ENCODE measurements at regions of chr17 and their contacts with region 1.

Region 1: DNA sequence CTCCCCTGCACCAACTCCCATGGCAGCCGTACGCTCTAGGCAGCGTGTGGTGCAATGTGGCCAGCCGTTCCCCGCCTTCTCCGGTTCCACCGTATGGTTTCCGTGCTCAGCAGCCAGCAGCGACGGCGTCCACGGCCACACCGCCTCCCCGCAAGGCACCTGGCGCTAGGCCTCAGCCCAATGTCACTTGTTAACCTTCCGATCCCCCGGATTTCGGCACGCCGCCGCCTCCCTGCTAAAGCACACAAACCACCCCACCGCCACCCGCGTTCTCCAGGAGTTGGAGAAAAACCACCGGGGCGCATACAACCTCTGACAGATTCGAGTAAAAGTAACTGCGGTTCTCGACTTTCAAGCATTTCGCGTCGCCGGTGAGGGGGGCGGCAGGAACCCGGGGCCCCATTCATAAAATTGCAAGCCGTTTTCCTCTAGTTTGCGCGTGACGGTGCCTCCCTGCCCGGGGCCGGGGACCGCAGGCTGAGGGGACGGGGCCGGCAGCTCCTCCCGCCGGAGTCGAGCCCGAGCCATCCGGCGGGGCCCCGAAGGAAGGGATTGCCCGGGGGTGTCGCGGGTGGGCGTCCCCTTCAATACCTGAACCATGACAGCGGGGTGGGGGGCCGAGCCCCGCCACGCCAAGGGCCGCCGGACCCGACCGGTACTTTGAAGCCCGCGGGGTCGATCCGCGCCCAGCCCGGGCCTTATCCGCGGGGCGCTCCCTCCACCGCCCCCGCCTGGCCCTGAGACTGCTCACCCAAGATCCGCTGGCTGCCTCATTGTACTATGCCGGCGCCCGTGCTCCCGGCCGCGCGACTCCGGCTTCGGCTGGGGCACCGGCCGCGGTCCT is at the start of gene TEX2:
- DNase-seq: peak; percentile 53
- H3K4me3 ChIP-seq: peak within 1 kb of the TSS; percentile 92
- H3K27ac ChIP-seq: peak within 1 kb of the TSS; percentile 38
- H3K4me1 ChIP-seq: peaks cover 17% of the 10 kb centered on the region
- CTCF ChIP-seq: no peak
- total RNA-seq, gene TEX2: 7.4 and 8.5 TPM in 2 replicates

Region 2: DNA sequence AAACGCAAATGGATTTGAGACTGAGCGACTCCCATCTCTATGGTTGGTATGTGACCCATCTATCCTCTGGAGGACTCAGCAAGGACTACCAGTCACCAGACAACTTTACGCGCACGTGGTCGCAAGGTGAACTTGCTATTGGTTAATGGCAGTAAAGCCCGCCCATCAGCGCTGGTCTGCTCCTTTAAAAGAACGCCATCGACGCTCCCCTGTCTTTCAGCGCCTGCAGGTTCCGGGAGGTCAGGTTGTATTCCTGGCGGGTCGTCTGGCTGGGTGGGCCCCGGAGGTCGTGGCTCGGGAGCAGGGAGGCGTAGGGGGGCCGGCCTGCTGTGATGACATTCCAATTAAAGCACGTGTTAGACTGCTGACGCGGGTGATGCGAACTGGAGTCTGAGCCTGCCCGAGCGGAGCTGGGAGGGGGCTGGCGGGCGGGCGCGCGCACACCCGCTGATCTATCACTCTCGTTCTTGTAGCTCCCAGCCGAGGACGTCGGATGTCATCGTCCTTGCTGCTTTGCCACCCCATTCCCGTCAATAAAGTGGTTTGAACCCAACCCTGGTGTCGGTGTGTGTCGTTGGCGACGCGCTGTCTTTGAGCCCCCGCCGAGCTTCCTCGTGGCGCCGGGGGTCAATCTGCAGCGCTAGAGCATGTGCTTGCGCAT is 116.8 kb before region 1 on chr17:
- CTCF ChIA-PET with region 1: no interaction called
- POLR2A ChIA-PET with region 1: no interaction called
- intact Hi-C with region 1: loop called (anchors 1 kb)
- DNase-seq: peak; percentile 100
- H3K4me3 ChIP-seq: peak overlapping the region; percentile 84
- H3K27ac ChIP-seq: peak overlapping the region; percentile 93
- H3K4me1 ChIP-seq: peaks cover 30% of the 10 kb centered on the region
- CTCF ChIP-seq: peak; percentile 24; the same call in 1 of the 2 replicates

Measured in OCI-LY7 (cell line).